Activated CD8-positive, alpha-beta T cell treated with anti-CD3 and anti-CD28 coated beads for 36 hours (primary cell): ENCODE measurements at regions of chr6 and their contacts with region 1.

Region 1: DNA sequence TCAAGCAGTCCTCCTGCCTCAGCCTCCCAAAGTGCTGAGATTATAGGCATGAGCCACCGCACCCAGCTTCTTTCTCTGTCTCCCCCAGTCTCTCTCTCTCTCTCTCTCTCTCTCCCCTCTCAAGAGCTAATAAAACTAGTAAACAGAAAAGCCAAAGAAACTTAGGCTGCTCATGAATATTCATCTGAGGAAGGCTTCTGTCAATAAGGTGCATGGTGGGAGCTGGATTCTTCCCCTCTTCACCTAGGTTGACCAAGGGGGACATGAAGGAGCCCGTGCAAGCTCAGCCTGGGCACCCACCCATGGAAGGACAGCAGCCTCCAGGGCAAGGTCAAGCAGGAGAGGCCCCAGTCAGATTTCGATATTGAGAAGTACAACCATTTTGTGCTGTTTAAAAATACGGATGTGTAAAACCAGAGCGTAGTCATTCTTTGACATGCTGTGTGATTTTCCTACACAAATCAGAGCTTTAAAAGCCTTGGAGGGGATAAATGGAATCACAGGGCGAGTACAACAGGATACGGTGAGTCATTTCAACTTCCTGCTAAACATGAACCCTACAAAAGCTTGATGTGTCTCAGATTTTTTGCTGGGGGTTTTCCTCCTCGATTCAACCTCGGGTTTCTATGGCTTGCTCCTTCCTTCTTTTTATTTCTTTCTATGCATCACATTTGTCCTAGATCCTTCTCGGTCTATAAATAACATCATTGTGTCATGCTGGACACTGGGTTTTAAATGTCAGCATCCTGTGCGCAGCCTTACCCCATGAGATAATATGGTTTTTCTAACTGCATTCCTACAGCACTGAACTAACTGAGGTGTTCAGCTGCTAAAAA is 368.9 kb upstream of the JARID2 start:
- DNase-seq: peak; percentile 54
- ATAC-seq: peak; percentile 70
- H3K4me3 Mint-ChIP-seq: peak overlapping the region; percentile 32
- H3K27ac Mint-ChIP-seq: peak overlapping the region; percentile 96
- H3K4me1 Mint-ChIP-seq: peaks cover 75% of the 10 kb centered on the region
- H3K27me3 Mint-ChIP-seq: no peaks in the 10 kb centered on the region
- CTCF ChIP-seq: no peak

Region 2: DNA sequence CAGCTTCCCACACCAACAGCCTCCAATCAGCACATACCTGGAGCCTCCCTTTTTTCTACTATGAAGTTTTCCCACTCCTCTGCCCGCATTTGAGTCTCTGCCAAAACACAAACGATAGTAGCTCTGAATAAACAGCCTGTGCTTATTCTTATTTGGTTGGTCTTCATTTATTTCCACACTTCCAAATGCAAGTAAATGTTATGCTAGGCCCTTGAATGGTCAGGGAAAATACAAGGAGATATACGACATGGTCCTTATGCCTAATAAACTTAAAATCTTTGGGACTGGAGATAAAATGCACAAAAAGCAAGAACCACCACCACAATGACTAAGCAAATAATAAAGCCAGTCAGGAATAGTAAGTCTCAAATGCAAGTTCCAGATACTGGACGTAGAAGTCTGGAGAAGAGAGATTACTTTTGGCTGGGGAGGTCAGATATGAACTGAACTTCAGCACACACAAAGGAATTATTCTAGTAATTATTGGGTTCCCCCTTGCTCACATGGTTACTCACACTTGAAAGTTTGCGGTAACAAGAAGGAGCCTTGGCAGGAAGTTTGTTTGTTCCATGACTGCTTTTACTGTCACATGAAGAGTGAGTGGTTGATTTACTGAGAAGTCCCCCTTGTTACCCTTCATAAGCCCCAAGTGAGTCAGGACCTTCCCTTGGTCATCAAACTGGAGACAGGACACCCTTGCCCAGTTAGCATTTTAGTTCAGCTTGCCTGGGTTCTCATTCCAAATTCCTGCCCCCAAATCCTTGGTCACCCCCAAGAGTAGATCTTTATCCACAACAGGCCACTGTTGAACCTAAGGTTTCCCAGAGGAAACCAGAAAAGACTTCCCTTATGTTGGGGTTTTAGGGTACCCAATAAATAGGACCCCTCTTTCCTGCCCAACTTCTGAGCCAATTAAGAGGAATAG is 142.3 kb before region 1 on chr6:
- CTCF ChIA-PET with region 1: interaction called, 3 read pairs
- POLR2A ChIA-PET with region 1: interaction called, 8 read pairs
- intact Hi-C with region 1: loop called (anchors 5 kb)
- DNase-seq: peak; percentile 67
- ATAC-seq: peak; percentile 40
- H3K4me3 Mint-ChIP-seq: peak overlapping the region; percentile 56
- H3K27ac Mint-ChIP-seq: peak overlapping the region; percentile 93
- H3K4me1 Mint-ChIP-seq: peaks cover 96% of the 10 kb centered on the region
- H3K27me3 Mint-ChIP-seq: no peaks in the 10 kb centered on the region
- CTCF ChIP-seq: no peak

Region 3: DNA sequence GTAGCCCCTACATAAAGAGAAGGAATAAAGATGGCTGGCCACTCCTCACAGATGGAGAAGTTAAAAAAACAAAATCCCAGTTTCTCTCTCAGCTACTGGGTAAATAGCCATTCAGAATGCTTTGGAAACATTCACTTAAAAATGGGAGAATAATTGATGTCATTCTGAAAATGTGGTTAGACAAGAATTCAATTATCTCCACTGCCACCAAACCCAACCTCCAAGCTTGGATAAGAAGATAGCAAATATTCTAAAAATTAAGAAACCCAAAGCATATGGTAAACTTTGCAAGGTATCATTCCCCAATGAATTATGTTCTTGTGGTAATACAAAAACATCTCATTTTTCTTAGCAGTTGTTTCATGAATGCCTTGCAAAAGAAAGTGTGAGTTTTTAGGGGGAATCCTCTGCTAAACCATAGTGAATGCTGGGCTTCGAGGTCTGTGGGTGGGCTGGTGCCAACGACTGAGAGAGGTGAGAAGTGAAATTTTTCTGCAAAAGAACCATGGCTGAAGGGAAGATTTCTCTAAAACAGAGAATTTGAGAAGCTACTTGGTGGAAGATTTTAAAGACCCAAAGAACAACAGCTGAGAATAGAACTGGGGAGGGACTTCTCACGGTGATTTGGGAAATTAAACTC is 129.0 kb before region 1 on chr6:
- CTCF ChIA-PET with region 1: no interaction called
- POLR2A ChIA-PET with region 1: interaction called, 10 read pairs
- intact Hi-C with region 1: no loop called
- DNase-seq: peak; percentile 71
- ATAC-seq: peak; percentile 18
- H3K4me3 Mint-ChIP-seq: peak overlapping the region; percentile 15
- H3K27ac Mint-ChIP-seq: peak overlapping the region; percentile 88
- H3K4me1 Mint-ChIP-seq: peaks cover 55% of the 10 kb centered on the region
- H3K27me3 Mint-ChIP-seq: no peaks in the 10 kb centered on the region
- CTCF ChIP-seq: no peak

Region 4: DNA sequence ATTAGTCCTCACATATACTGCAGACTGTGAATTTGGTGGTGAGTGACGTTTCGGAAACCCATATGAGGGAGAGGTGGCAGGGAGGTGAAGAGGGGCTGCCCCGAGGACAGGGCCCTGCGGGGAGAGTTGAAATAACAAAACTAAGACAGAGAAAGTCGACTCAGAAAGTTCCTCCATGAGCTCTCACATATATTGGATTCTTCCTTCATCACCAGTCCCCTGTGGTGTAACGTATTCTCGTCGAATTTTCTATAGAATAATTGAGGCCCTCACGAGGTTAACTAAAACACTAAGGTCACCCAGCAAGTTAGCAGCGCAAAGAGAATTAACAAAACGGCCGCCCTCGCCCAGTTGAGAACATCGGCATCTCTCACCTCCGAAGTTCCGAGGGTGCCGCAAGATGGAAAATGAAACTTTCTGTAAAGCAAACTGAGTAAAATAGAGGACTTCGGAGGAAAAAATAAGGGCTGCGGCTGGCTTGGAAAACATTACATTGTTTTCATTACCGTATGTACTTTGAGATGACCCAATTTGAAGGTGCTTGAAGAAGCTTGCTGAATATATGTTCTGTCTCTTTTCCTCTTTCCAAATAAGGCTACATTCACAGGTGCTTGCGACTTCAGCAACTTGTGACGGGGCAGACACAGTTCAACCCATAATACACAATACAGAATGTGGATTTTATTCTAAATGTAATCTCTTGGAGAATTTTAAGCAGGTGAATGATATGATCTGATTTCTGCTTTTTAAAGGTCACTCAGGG is 122.1 kb before region 1 on chr6:
- CTCF ChIA-PET with region 1: no interaction called
- POLR2A ChIA-PET with region 1: interaction called, 17 read pairs
- intact Hi-C with region 1: no loop called
- DNase-seq: peak; percentile 73
- ATAC-seq: peak; percentile 80
- H3K4me3 Mint-ChIP-seq: peak overlapping the region; percentile 28
- H3K27ac Mint-ChIP-seq: peak overlapping the region; percentile 88
- H3K4me1 Mint-ChIP-seq: peaks cover 18% of the 10 kb centered on the region
- H3K27me3 Mint-ChIP-seq: no peaks in the 10 kb centered on the region
- CTCF ChIP-seq: no peak

Region 5: DNA sequence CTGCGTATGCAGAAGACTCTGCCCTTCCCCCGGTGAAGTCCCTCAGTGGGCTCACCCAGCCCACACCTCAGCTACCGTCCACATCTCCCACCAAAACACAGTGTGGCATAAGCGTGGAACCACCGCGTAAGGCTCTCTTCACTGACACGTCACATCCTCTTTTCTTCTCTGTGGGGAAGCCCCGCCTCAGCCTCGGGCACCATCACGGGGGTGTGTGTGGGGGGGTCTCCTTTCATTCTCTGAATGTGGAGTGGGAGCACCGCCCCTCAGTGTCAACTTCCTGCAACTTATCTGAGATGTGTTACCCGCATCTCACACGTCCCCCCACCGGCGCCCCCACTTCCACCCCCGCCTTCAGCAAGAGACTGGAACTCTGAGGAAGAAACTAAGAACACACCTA is 19.5 kb before region 1 on chr6:
- CTCF ChIA-PET with region 1: interaction called, 4 read pairs
- POLR2A ChIA-PET with region 1: interaction called, 50 read pairs
- intact Hi-C with region 1: no loop called
- DNase-seq: peak; percentile 93
- ATAC-seq: peak; percentile 90
- H3K4me3 Mint-ChIP-seq: peak overlapping the region; percentile 18
- H3K27ac Mint-ChIP-seq: peak overlapping the region; percentile 88
- H3K4me1 Mint-ChIP-seq: peaks cover 52% of the 10 kb centered on the region
- H3K27me3 Mint-ChIP-seq: no peaks in the 10 kb centered on the region
- CTCF ChIP-seq: no peak

Region 6: GRCh38 chr6:15017261-15017660 is 140.3 kb after region 1 on chr6:
- CTCF ChIA-PET with region 1: no interaction called
- POLR2A ChIA-PET with region 1: no interaction called
- intact Hi-C with region 1: loop called (anchors 5 kb)
- DNase-seq: peak; percentile 34
- ATAC-seq: peak; percentile 45
- H3K4me3 Mint-ChIP-seq: no peak overlapping the region
- H3K27ac Mint-ChIP-seq: no peak overlapping the region
- H3K4me1 Mint-ChIP-seq: peaks cover 34% of the 10 kb centered on the region
- H3K27me3 Mint-ChIP-seq: peaks cover 12% of the 10 kb centered on the region
- CTCF ChIP-seq: no peak

Region 7: DNA sequence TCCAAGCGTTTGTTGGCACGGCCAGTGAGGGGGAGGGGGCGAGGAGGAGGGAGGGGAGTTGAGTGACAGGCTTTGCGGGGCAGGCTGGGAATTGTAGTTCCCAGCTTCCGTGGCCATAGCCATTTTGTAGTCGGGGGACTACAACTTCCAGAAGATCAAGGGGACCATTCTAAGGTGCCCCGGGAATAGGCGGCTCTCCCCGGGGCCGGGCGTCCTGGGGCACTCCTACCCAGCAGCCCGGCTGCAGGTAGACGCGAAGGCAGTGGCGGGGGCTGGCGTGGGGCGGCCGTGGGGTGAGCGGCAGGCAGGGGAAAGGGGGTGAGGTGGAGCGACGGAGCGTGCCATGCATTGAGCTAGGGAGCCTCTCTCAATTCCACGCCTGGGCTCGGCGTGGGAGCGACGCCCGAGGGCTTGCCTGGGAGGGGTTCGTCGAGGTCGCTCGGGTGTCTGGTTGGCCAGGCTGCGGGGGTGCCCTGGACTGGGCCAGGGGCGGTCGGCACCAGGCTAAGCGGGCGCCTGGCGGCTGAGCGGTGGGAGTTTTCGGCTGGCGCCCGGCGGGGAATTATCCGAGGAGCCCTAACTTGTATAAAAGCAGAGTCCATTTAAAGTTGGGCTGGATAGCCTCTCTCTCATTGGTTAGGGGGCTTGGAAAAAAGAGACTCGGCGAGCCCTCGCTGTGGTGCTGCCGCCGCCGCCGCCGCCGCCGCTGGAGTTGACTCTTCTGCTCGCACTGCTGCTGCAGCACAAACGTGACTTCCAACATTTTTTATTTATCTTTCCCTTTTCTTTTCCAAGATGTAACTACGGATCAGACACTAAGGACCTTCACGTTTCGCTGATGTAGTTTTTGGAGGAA is 368.6 kb after region 1 on chr6 and contains the start of gene JARID2:
- CTCF ChIA-PET with region 1: no interaction called
- POLR2A ChIA-PET with region 1: no interaction called
- intact Hi-C with region 1: loop called (anchors 5 kb)
- DNase-seq: peak; percentile 99
- ATAC-seq: peak; percentile 66
- H3K4me3 Mint-ChIP-seq: peak within 1 kb of the TSS; percentile 100
- H3K27ac Mint-ChIP-seq: peak within 1 kb of the TSS; percentile 97
- H3K4me1 Mint-ChIP-seq: peaks cover 18% of the 10 kb centered on the region
- H3K27me3 Mint-ChIP-seq: no peaks in the 10 kb centered on the region
- CTCF ChIP-seq: no peak
- total RNA-seq, gene JARID2: 25.4 to 25.5 TPM

Region 8: DNA sequence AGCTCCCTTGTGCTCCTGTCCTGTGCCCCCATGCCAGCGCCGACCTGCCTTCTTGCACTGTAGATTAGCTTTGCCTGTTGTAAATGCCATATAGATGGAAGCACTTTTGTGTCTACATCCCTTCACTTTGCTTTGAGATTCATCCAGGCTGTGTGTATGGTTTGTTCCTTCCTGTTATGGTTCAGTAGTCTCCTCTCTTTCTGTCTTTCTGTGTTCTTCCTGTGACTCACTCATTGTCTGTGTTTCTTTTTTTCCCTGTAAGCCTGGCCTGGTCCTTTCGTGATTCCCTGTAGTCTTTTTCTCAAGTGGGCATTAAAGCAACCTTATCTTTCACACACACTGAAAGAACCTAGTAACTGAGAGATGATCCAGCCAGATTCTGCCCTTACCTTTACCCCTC is 435.5 kb after region 1 on chr6:
- CTCF ChIA-PET with region 1: no interaction called
- POLR2A ChIA-PET with region 1: no interaction called
- intact Hi-C with region 1: no loop called
- DNase-seq: no peak
- ATAC-seq: peak; percentile 54
- H3K4me3 Mint-ChIP-seq: no peak overlapping the region
- H3K27ac Mint-ChIP-seq: peak overlapping the region; percentile 81
- H3K4me1 Mint-ChIP-seq: peaks cover 85% of the 10 kb centered on the region
- H3K27me3 Mint-ChIP-seq: no peaks in the 10 kb centered on the region
- CTCF ChIP-seq: no peak